Activated naive CD4-positive, alpha-beta T cell treated with anti-CD3 and anti-CD28 coated beads for 36 hours (primary cell): ENCODE measurements at regions of chr6 and their contacts with region 1.

Region 1: GRCh38 chr6:87701676-87702588 is at the start of gene AKIRIN2:
- DNase-seq: peak; percentile 97
- H3K4me3 Mint-ChIP-seq: peak within 1 kb of the TSS; percentile 86
- H3K27ac Mint-ChIP-seq: peak within 1 kb of the TSS; percentile 89
- H3K4me1 Mint-ChIP-seq: peaks cover 42% of the 10 kb centered on the region
- H3K27me3 Mint-ChIP-seq: no peaks in the 10 kb centered on the region
- total RNA-seq, gene AKIRIN2: 47.6 to 49.8 TPM

Region 2: GRCh38 chr6:87257565-87257964 is 444.4 kb before region 1 on chr6:
- CTCF ChIA-PET with region 1: no interaction called
- intact Hi-C with region 1: no loop called
- DNase-seq: no peak
- H3K4me3 Mint-ChIP-seq: no peak overlapping the region
- H3K27ac Mint-ChIP-seq: no peak overlapping the region
- H3K4me1 Mint-ChIP-seq: peaks cover 20% of the 10 kb centered on the region
- H3K27me3 Mint-ChIP-seq: no peaks in the 10 kb centered on the region

Region 3: DNA sequence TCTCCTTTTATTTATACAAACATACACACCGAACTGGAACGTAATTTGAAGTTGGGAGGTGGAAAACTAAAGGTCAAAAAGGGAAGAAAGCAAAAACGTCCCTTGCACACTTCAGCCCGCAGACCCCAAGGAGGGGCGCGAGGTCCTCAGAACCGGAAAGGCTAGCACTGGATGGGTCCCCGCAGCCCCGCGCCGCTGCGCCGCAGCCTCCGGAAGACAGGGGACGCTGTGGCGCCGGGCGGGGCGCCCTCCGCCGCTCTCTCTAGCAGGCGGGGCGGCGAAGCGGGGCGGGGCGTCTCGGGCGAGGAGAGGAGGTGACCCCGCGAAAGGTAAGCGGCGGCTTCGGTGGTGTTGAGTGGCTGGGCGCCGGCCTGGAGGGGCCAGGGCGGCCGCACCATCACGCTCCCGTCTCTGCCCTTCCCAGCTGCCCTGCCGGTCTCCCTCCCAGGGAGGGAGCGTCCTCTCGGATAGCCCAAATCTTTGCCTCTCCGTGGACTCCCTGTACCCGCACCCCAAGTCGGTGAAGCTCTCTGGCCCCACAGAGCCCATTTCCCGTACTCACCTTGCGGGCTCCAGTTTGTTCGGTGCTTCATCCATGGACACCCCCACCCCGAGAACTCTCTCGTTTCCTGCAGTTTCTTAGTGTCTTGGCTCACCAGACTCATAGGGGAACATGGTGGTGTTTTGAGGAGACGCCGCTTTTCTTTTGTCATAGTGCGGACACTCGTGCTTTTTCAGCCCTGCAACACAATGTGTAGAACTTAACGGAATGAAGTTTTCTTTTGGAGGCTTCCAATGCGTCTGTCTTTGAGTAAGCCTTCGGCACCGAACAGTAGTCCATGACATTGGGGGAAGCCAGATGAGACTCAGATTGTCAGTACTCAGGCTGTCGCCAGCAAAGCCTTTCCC is 379.4 kb before region 1 on chr6 and contains the start of gene SMIM8:
- CTCF ChIA-PET with region 1: no interaction called
- intact Hi-C with region 1: loop called (anchors 2 kb)
- DNase-seq: peak; percentile 86
- H3K4me3 Mint-ChIP-seq: peak within 1 kb of the TSS; percentile 98
- H3K27ac Mint-ChIP-seq: peak within 1 kb of the TSS; percentile 85
- H3K4me1 Mint-ChIP-seq: peaks cover 18% of the 10 kb centered on the region
- H3K27me3 Mint-ChIP-seq: no peaks in the 10 kb centered on the region
- total RNA-seq, gene SMIM8: 8.0 to 8.6 TPM

Region 4: DNA sequence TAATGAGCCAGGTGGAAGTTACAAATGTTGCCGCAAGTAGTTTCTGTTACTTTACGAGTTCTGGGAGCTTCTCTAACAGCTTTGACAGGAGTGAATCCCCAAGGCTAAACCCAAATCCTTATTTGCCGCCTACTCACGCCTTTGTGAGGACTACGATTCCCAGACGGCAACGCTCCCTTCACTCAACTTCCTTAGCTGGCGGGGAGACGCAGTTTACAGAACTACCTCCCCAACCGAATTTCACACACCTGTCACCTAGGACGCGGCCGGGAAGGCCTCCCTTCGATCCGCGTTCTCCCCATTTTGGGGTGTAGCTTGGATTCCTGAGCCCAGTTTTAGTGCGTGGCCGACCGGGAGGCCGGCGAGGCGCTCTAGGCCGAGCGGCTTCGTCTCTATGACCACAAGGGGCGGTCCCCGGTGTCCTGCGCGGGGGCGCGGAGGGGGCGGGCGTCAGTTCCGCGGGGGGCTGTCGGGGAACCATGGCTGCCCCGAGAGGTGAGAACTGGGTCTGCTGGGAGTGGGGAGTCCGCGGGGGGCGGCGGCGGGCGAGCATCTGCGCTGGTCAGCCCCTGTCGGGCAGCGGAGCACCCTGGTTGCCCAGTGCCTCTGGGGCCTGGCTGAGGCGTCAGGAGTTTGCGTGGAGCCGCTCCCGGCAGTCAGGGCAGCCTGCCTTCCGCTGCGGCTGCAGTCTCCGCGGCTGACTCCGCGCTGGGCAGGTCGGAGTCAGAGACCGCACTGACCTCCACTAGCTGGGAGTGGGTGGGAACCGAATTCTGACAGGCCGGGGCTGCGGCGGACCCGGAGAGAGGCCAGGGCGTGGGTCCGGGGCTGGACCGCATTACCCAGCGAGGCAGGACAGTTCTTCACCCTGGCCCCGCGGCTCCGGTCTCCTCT is 229.2 kb before region 1 on chr6 and contains the start of gene SLC35A1:
- CTCF ChIA-PET with region 1: no interaction called
- intact Hi-C with region 1: loop called (anchors 1 kb)
- DNase-seq: peak; percentile 80
- H3K4me3 Mint-ChIP-seq: peak within 1 kb of the TSS; percentile 95
- H3K27ac Mint-ChIP-seq: peak within 1 kb of the TSS; percentile 92
- H3K4me1 Mint-ChIP-seq: peaks cover 15% of the 10 kb centered on the region
- H3K27me3 Mint-ChIP-seq: peaks cover 4% of the 10 kb centered on the region
- total RNA-seq, gene SLC35A1: 6.7 to 6.8 TPM

Region 5: GRCh38 chr6:87645080-87645479 is 56.9 kb before region 1 on chr6:
- CTCF ChIA-PET with region 1: interaction called, 3 read pairs
- intact Hi-C with region 1: loop called (anchors 2 kb)
- DNase-seq: no peak
- H3K4me3 Mint-ChIP-seq: peak overlapping the region; percentile 50
- H3K27ac Mint-ChIP-seq: peak overlapping the region; percentile 36
- H3K4me1 Mint-ChIP-seq: peaks cover 12% of the 10 kb centered on the region
- H3K27me3 Mint-ChIP-seq: no peaks in the 10 kb centered on the region

Region 6: GRCh38 chr6:87682310-87682709 is 19.6 kb before region 1 on chr6:
- CTCF ChIA-PET with region 1: interaction called, 3 read pairs
- intact Hi-C with region 1: loop called (anchors 2 kb)
- DNase-seq: no peak
- H3K4me3 Mint-ChIP-seq: no peak overlapping the region
- H3K27ac Mint-ChIP-seq: peak overlapping the region; percentile 63
- H3K4me1 Mint-ChIP-seq: peaks cover 52% of the 10 kb centered on the region
- H3K27me3 Mint-ChIP-seq: no peaks in the 10 kb centered on the region

Region 7: GRCh38 chr6:87742106-87742505 is 40.2 kb after region 1 on chr6:
- CTCF ChIA-PET with region 1: interaction called, 3 read pairs
- intact Hi-C with region 1: loop called (anchors 1 kb)
- DNase-seq: peak; percentile 76
- H3K4me3 Mint-ChIP-seq: no peak overlapping the region
- H3K27ac Mint-ChIP-seq: no peak overlapping the region
- H3K4me1 Mint-ChIP-seq: peaks cover 26% of the 10 kb centered on the region
- H3K27me3 Mint-ChIP-seq: no peaks in the 10 kb centered on the region

Region 8: GRCh38 chr6:88963139-88964090 is 1261.5 kb after region 1 on chr6 and contains the start of gene RNGTT:
- CTCF ChIA-PET with region 1: no interaction called
- intact Hi-C with region 1: loop called (anchors 2 kb)
- DNase-seq: peak; percentile 99
- H3K4me3 Mint-ChIP-seq: peak within 1 kb of the TSS; percentile 99
- H3K27ac Mint-ChIP-seq: peak within 1 kb of the TSS; percentile 87
- H3K4me1 Mint-ChIP-seq: peaks cover 34% of the 10 kb centered on the region
- H3K27me3 Mint-ChIP-seq: no peaks in the 10 kb centered on the region
- total RNA-seq, gene RNGTT: 21.7 to 23.5 TPM